ENCODE measurements at regions of chr3 and their contacts with region 1.

Region 1: GRCh38 chr3:102229062-102229655 is 205.7 kb upstream of the ZPLD1 start:
- DNase-seq: peak; percentile 79
- H3K4me3 ChIP-seq: no peak overlapping the region
- H3K27ac ChIP-seq: no peak overlapping the region
- H3K4me1 ChIP-seq: peaks cover 0 to 11% (median 0%) of the 10 kb centered on the region in 4 donors
- H3K27me3 ChIP-seq: no peaks in the 10 kb centered on the region
- CTCF ChIP-seq: peak; percentile 88 to 95 (median 93)
- EP300 ChIP-seq: no peak
- POLR2A ChIP-seq: no peak

Region 2: DNA sequence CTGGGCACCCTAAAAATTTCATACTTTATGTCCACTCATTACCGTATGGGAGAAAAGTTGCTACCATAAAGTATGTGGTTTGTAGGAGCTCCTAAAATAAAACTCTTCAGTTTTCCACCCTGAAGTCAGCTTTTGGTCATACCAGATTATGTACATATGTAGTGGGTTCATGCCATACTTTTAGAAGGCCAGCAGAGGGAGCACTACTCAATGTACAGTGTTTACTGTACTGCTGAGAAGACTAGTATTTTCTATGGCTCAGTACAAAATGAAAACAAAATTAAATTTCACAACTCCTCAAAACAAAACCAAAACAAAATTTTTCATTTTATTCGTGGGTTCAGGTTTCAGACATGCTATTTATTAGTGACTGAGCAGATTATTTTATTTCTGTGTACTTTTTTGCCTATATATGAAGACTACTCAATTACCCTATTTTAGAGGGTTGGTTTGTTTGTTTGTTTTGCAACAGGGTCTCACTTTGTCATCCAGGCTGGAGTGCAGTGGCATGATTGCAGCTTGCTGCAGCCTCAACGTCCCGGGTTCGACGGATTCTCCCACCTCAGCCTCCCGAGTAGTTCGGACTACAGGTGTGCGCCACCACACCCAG is 425.9 kb before region 1 on chr3:
- in situ Hi-C with region 1: loop called in 3 of 4 experiments (anchors 5 kb)
- intact Hi-C with region 1: no loop called
- DNase-seq: peak; percentile 51
- H3K4me3 ChIP-seq: no peak overlapping the region
- H3K27ac ChIP-seq: no peak overlapping the region
- H3K4me1 ChIP-seq: peaks cover 0 to 11% (median 4%) of the 10 kb centered on the region in 4 donors
- H3K27me3 ChIP-seq: no peaks in the 10 kb centered on the region
- CTCF ChIP-seq: peak; percentile 80 to 90 (median 83)
- EP300 ChIP-seq: no peak
- POLR2A ChIP-seq: no peak

Region 3: DNA sequence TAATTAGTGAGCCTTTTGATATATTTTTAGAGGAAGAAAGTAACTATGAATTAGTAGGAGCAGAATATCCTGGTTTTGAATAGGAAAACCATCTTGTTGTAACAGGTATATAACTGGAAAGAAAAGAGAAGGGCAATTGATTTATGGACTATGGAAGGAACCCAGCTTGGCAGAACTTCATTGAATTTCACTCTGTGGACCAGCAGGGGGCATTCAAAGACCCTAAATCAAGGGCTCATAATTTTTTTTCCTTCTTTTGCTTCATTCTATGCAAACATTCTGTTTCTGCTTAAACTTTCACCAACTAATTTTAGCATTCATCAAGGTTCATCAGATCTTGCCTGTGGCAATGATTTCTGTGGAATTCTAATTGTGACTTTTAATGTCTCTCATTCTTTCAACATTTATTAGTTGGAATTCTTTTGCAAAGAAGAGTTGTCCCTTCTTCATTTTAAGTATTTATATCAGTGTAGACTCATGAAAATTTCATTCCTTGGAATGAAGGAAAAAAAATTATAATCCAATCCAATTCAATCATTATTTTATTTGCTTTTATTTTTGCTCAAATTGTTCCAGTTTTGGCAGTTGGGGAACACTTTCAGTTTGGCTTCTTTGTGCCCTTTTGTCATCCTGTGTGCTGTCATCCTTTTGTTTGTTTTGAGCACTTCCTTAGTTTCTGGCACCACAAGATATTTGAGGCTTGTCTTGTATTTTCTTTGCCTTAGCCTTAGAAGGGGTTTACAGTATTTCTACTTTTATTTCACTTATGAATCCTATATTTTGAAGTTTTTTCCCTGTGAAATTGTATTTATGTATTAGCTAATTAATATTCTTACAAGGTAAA is 419.8 kb before region 1 on chr3:
- in situ Hi-C with region 1: loop called (anchors 5 to 10 kb)
- intact Hi-C with region 1: loop called (anchors 2 kb)
- DNase-seq: peak; percentile 27
- H3K4me3 ChIP-seq: no peak overlapping the region
- H3K27ac ChIP-seq: peak overlapping the region in 2 of 4 donors; percentile 3
- H3K4me1 ChIP-seq: peaks cover 6 to 29% (median 12%) of the 10 kb centered on the region in 4 donors
- H3K27me3 ChIP-seq: no peaks in the 10 kb centered on the region
- CTCF ChIP-seq: peak; percentile 58 to 79 (median 64)
- EP300 ChIP-seq: no peak
- POLR2A ChIP-seq: no peak

Region 4: GRCh38 chr3:101890716-101891115 is 338.4 kb before region 1 on chr3:
- in situ Hi-C with region 1: no loop called
- intact Hi-C with region 1: no loop called
- DNase-seq: no peak
- H3K4me3 ChIP-seq: no peak overlapping the region
- H3K27ac ChIP-seq: no peak overlapping the region
- H3K4me1 ChIP-seq: peaks cover 0 to 18% (median 11%) of the 10 kb centered on the region in 4 donors
- H3K27me3 ChIP-seq: no peaks in the 10 kb centered on the region
- CTCF ChIP-seq: no peak
- EP300 ChIP-seq: no peak
- POLR2A ChIP-seq: no peak

Region 5: DNA sequence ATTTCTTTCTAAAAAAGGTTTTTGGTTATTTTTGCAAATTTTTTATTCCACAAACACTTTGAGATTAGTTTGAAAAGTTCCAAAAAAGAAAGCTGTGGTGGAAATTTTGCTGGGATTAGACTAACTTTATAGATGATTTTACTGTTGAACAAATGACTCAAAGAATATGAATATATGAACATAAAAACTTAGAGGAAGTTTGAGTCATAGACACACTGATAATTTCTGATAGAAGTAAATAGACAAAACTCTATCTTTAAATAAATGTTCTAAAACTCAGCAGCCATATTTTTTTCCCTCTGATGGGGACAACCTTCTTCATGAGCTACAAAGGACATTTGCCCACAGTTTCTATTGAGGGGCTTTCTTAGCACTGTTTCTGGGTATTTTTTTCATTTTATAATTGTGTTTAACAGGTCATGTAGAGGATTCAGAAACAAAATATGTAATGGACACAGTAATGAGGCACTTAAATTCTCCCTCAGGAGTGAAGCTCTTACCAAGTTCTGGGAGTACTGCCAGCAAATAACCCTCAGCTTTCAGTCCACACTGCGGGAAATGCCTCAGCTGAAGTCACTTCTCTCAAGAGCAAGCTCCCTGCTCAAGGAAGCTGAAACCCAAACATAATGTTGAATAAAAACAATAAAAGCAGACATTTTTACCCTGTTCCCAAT is 222.2 kb before region 1 on chr3:
- in situ Hi-C with region 1: no loop called
- intact Hi-C with region 1: loop called (anchors 10 kb)
- DNase-seq: peak; percentile 14
- H3K4me3 ChIP-seq: no peak overlapping the region
- H3K27ac ChIP-seq: no peak overlapping the region
- H3K4me1 ChIP-seq: peaks cover 0 to 8% (median 2%) of the 10 kb centered on the region in 4 donors
- H3K27me3 ChIP-seq: no peaks in the 10 kb centered on the region
- CTCF ChIP-seq: no peak
- EP300 ChIP-seq: no peak
- POLR2A ChIP-seq: no peak

Region 6: GRCh38 chr3:102069211-102069662 is 159.9 kb before region 1 on chr3:
- in situ Hi-C with region 1: no loop called
- intact Hi-C with region 1: no loop called
- DNase-seq: no peak
- H3K4me3 ChIP-seq: no peak overlapping the region
- H3K27ac ChIP-seq: peak overlapping the region; percentile 43 to 61 (median 50)
- H3K4me1 ChIP-seq: peaks cover 0 to 30% (median 14%) of the 10 kb centered on the region in 4 donors
- H3K27me3 ChIP-seq: no peaks in the 10 kb centered on the region
- CTCF ChIP-seq: no peak
- EP300 ChIP-seq: no peak
- POLR2A ChIP-seq: no peak

Region 7: DNA sequence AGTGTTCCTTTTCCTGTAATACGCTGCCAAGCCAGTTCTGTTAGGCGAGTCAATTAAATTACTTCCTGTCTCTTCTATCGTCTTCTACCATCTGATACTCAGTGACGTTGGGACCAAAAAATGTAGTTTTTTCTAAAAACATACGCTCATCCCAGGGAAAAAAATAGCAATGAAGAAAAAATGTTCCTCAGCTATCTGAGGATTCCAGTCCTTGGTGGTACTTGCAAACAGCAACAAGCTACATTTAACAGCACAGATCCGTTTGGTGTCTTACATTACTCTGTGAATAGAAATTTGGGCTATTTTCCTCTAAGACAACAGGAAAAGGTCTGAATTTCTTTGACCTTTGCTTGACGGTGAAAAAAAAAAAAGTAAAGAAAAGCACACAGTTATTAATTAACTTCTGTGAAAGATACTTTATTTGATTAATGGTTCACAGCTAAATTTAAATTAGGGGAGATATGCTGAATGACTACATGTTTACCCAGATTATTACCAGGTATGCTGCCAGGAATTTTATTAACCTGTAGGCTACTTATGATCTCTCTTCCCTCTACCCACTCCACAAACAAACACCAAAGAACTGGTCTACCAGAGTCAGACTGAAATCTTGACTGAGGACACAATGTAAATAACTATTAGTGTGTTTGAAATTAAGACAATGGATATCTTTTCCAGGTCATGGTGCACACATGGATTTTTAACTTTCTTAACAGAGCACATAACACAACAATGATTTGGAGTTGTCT is 48.7 kb before region 1 on chr3:
- in situ Hi-C with region 1: no loop called
- intact Hi-C with region 1: no loop called
- DNase-seq: no peak
- H3K4me3 ChIP-seq: no peak overlapping the region
- H3K27ac ChIP-seq: peak overlapping the region; percentile 49 to 67 (median 58)
- H3K4me1 ChIP-seq: peaks cover 5 to 40% (median 32%) of the 10 kb centered on the region in 4 donors
- H3K27me3 ChIP-seq: no peaks in the 10 kb centered on the region
- CTCF ChIP-seq: no peak
- EP300 ChIP-seq: no peak
- POLR2A ChIP-seq: no peak

Region 8: DNA sequence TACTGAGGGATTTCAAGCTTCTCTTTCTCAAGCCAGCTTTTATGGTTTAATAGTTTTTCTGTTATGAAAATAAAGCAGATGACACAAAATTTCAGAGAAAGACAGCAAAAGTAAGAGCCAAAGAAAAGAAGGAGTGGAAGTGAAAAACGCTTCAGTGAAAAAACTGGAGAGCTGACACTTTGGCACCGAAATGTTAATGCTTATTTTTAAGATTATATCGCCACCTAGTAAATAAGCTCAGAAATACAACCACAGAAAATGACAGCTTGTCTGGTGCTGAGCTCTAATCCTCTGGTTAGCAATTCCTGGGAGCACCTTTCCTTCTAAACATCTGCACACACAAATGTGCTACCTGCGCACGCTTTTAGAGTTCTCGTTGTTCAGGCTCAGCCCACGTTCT is 307.3 kb after region 1 on chr3:
- in situ Hi-C with region 1: loop called (anchors 5 to 25 kb)
- intact Hi-C with region 1: loop called (anchors 5 kb)
- DNase-seq: no peak
- H3K4me3 ChIP-seq: no peak overlapping the region
- H3K27ac ChIP-seq: no peak overlapping the region
- H3K4me1 ChIP-seq: no peaks in the 10 kb centered on the region
- H3K27me3 ChIP-seq: no peaks in the 10 kb centered on the region
- CTCF ChIP-seq: peak; percentile 31 to 48 (median 36)
- EP300 ChIP-seq: no peak
- POLR2A ChIP-seq: no peak

Measured in transverse colon (tissue), 4 donors.